Prostate gland (tissue), 2 donors: ENCODE measurements at regions of chr14 and their contacts with region 1.

Region 1: GRCh38 chr14:44961604-44962333 is at the starts of genes KLHL28 and TOGARAM1:
- DNase-seq: peak; percentile 99
- H3K4me3 ChIP-seq: peak within 1 kb of the TSS; percentile 69 to 78
- H3K27ac ChIP-seq: peak within 1 kb of the TSS; percentile 90 to 92
- H3K4me1 ChIP-seq: peaks cover 6% of the 10 kb centered on the region
- H3K27me3 ChIP-seq: no peaks in the 10 kb centered on the region
- CTCF ChIP-seq: peak in 1 of 4 experiments; percentile 22
- POLR2A ChIP-seq: peak; percentile 83
- total RNA-seq, gene KLHL28: 7.4 to 9.7 TPM
- total RNA-seq, gene TOGARAM1: 17.9 to 26.8 TPM

Region 2: GRCh38 chr14:44897045-44897844 is 64.5 kb before region 1 on chr14:
- intact Hi-C with region 1: loop called (anchors 2 kb)
- DNase-seq: peak; percentile 99
- H3K4me3 ChIP-seq: peak overlapping the region; percentile 91
- H3K27ac ChIP-seq: peak overlapping the region; percentile 99 to 100
- H3K4me1 ChIP-seq: no peaks in the 10 kb centered on the region
- H3K27me3 ChIP-seq: no peaks in the 10 kb centered on the region
- CTCF ChIP-seq: no peak
- POLR2A ChIP-seq: peak; percentile 61

Region 3: GRCh38 chr14:45051180-45051579 is 89.4 kb after region 1 on chr14:
- intact Hi-C with region 1: no loop called
- DNase-seq: no peak
- H3K4me3 ChIP-seq: no peak overlapping the region
- H3K27ac ChIP-seq: no peak overlapping the region
- H3K4me1 ChIP-seq: no peaks in the 10 kb centered on the region
- H3K27me3 ChIP-seq: no peaks in the 10 kb centered on the region
- CTCF ChIP-seq: no peak
- POLR2A ChIP-seq: no peak

Region 4: DNA sequence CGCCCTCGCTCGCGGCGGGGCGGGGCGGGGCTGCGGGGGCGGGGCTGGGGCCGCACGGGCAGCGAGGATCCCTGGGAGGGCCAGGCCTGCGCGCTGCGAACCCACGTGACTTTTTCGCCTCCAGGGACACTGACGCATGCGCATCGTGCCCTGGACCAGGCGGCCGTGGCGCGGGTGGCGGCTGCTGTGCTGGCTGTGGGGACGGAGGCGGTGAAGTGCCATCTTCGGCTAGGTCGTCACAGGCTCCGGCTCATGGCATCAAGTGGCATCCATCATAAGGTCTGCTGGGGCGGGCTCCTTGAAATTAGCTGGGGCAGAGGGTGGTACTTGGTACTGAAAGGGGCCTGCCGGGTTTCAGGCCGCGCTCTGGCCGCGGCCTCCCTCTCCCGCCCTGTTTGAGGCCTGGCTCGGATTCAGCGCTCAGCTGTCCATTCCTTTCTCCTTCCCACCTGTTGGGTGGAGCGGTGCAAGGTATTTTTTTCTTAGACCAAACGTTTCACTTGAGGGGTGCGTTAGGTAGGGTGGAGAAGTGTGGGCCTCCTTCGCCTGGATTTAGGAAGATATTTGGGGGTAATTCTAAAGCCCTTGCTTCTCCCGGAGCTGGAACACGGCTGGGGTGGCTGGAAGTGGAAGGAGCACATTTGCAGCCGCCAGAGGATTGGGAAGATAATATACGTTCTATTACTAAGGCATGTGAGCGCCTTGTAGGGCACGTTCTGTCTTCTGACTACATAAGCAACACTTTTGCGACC is 122.4 kb after region 1 on chr14 and contains the start of gene PRPF39:
- intact Hi-C with region 1: loop called (anchors 2 kb)
- DNase-seq: peak; percentile 93
- H3K4me3 ChIP-seq: peak within 1 kb of the TSS; percentile 55 to 71
- H3K27ac ChIP-seq: peak within 1 kb of the TSS; percentile 82 to 87
- H3K4me1 ChIP-seq: peaks cover 6% of the 10 kb centered on the region
- H3K27me3 ChIP-seq: no peaks in the 10 kb centered on the region
- CTCF ChIP-seq: peak in 2 of 4 experiments; percentile 2
- POLR2A ChIP-seq: peak; percentile 89
- total RNA-seq, gene PRPF39: 30.3 to 47.1 TPM

Region 5: DNA sequence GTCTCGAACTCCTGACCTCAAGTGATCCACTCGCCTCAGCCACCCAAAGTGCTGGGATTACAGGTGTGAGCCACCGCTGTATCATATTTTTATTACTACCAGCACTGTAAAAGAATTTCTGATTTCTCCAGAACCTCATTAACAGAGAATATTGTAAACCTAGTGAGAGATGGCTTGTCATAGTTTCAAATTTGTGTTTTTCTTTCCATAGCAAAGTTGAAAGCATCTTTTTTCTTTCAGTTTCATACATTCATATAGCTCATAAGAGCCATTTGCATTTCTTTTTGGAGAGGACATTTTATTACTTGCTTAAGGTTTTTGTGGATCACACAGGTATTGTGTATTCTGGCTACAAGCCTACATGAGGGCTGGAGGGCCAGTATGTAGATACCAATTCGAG is 233.2 kb after region 1 on chr14:
- intact Hi-C with region 1: no loop called
- DNase-seq: no peak
- H3K4me3 ChIP-seq: no peak overlapping the region
- H3K27ac ChIP-seq: no peak overlapping the region
- H3K4me1 ChIP-seq: no peaks in the 10 kb centered on the region
- H3K27me3 ChIP-seq: no peaks in the 10 kb centered on the region
- CTCF ChIP-seq: no peak
- POLR2A ChIP-seq: no peak

Region 6: GRCh38 chr14:45253068-45253753 is 291.4 kb after region 1 on chr14 and contains the start of gene MIS18BP1:
- intact Hi-C with region 1: loop called (anchors 5 kb)
- DNase-seq: peak; percentile 96
- H3K4me3 ChIP-seq: peak within 1 kb of the TSS; percentile 58 to 79
- H3K27ac ChIP-seq: peak within 1 kb of the TSS; percentile 86 to 94
- H3K4me1 ChIP-seq: no peaks in the 10 kb centered on the region
- H3K27me3 ChIP-seq: no peaks in the 10 kb centered on the region
- CTCF ChIP-seq: peak; percentile 71 to 86 (median 78)
- POLR2A ChIP-seq: peak; percentile 75
- total RNA-seq, gene MIS18BP1: 23.3 to 46.7 TPM